Spleen (tissue), 13 donors: ENCODE measurements at regions of chr19 and their contacts with region 1.

Region 1: DNA sequence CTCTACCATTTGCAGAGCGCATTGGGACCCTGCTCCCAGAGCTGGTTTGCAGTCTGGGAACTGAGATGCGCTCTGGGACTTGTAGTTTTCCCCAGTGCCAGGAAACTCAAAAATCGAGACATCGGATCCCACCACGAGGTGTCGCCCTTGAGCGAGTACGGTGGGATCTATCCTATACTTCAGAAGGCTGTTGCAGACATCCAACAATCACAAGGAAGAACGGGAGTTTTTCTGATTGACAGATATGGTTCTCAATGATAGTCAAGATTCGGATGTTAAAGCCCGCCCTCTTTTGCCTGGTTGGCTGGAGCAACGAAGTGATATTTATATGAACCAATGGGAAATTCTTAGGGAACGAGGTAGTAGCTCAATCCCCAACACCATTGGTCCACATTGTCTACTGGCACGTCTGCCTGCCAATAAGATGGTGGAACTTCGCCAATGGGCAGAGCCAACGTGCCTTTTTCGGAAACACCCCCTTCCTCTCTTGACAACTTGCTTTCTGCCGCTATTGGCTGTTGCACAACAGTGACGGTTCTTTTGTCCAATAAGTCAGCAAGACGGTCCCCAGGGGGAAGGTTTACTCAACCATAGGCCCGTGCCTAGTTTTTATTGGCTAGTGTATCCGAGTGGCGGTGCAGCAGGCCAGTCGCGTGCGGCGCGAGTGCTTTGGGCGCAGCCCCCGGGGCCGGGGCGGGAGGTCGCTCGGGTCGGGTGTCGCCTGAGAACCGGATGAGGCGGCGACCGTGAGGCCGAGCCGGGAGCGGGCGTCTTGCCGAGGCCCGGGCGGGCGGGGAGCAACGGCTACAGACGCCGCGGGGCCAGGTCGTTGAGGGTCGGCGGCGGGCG is at the start of gene DNM2:
- DNase-seq: peak; percentile 99
- H3K4me3 ChIP-seq: peak within 1 kb of the TSS; percentile 98 to 100 (median 100)
- H3K27ac ChIP-seq: peak within 1 kb of the TSS; percentile 94 to 99 (median 98)
- H3K4me1 ChIP-seq: peaks cover 28 to 63% (median 48%) of the 10 kb centered on the region in 6 donors
- H3K27me3 ChIP-seq: no peaks in the 10 kb centered on the region
- CTCF ChIP-seq: peak; percentile 68 to 97 (median 88)
- POLR2A ChIP-seq: peak in 1 of 3 donors; percentile 60
- total RNA-seq, gene DNM2: 175 to 298 (median 197) TPM

Region 2: DNA sequence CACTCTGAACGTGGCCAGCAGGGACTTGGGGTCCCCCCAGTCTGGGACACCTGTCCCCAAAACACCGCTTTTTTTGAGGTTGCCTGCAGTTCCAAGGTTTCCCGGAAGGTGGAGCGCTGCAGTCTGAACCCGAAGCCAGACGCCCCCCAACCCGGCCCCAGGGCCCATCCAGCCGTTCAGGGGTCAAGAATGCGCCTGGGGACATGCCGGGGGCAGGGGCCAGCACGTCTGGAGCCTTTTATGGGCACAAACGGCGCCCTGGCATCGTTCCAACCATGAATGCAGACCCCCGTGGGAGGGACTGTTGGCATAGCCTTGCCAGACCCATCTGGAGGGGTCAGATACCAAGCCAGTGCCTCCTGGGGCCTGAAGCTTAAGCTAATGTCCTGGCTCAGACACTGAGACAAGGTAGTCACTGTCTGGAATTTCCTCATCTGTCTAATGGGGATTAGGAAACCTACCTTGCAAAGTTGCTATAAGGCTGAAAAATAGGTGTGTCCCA is 207.2 kb before region 1 on chr19:
- intact Hi-C with region 1: no loop called
- DNase-seq: no peak
- H3K4me3 ChIP-seq: no peak overlapping the region
- H3K27ac ChIP-seq: peak overlapping the region in 2 of 8 donors; percentile 35 to 36
- H3K4me1 ChIP-seq: peaks cover 10 to 56% (median 26%) of the 10 kb centered on the region in 6 donors
- H3K27me3 ChIP-seq: peaks cover 6 to 64% (median 35%) of the 10 kb centered on the region in 7 donors
- CTCF ChIP-seq: peak; percentile 30 to 79 (median 55)
- POLR2A ChIP-seq: no peak

Region 3: GRCh38 chr19:10543420-10544241 is 173.9 kb before region 1 on chr19 and contains the start of gene ATG4D:
- intact Hi-C with region 1: no loop called
- DNase-seq: peak; percentile 94
- H3K4me3 ChIP-seq: peak within 1 kb of the TSS; percentile 73 to 96 (median 88)
- H3K27ac ChIP-seq: peak within 1 kb of the TSS; percentile 85 to 97 (median 94)
- H3K4me1 ChIP-seq: peaks cover 9 to 62% (median 32%) of the 10 kb centered on the region in 6 donors
- H3K27me3 ChIP-seq: peaks cover 0 to 14% (median 0%) of the 10 kb centered on the region in 7 donors
- CTCF ChIP-seq: peak in 4 of 11 experiments; percentile 11 to 27 (median 20)
- POLR2A ChIP-seq: peak in 1 of 3 donors; percentile 41
- total RNA-seq, gene ATG4D: 18.2 to 40.5 (median 31.5) TPM

Region 4: GRCh38 chr19:10769533-10770491 is 52.2 kb after region 1 on chr19:
- intact Hi-C with region 1: loop called (anchors 5 kb)
- DNase-seq: no peak
- H3K4me3 ChIP-seq: peak overlapping the region in 1 of 8 donors; percentile 21
- H3K27ac ChIP-seq: peak overlapping the region; percentile 61 to 92 (median 72)
- H3K4me1 ChIP-seq: peaks cover 34 to 87% (median 58%) of the 10 kb centered on the region in 6 donors
- H3K27me3 ChIP-seq: no peaks in the 10 kb centered on the region
- CTCF ChIP-seq: peak in 10 of 11 experiments; percentile 9 to 56 (median 39)
- POLR2A ChIP-seq: no peak

Region 5: DNA sequence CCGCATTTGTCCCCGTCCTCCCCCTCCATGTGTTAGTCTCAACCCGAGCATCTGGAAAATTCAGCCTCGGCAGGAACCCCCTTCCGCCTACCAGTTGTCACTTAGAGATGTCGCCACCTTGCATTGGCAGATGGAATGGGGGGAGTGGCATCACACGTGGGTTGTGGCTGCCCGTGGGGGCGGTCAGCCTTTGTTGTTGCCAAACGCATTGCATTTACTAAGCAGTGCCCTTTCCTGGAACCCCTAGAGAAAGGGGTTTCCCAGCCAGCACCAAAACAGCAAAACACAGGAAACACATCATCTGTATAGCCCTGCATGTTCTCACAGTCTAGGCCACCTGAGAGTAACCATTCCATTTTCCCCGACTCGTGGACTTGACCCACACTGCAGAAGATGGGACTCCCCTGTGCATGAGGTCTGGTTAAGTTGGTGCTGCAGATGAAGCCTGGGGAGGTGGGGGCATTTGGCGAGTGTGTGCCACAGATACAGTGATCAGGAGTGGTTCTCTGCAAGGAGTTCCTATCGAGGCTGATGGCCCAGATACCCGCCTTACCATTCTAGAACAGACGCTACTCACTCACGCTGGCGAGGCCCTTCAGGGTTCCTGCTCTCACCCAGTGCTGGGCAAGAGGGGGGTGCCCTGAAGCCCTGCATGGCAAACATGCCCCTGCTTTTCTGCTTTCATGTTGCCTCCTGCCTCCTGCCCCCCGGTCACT is 80.1 kb after region 1 on chr19:
- intact Hi-C with region 1: no loop called
- DNase-seq: peak; percentile 88
- H3K4me3 ChIP-seq: peak overlapping the region in 1 of 8 donors; percentile 43
- H3K27ac ChIP-seq: peak overlapping the region in 7 of 8 donors; percentile 23 to 84 (median 61)
- H3K4me1 ChIP-seq: peaks cover 0 to 43% (median 25%) of the 10 kb centered on the region in 6 donors
- H3K27me3 ChIP-seq: no peaks in the 10 kb centered on the region
- CTCF ChIP-seq: no peak
- POLR2A ChIP-seq: no peak

Region 6: DNA sequence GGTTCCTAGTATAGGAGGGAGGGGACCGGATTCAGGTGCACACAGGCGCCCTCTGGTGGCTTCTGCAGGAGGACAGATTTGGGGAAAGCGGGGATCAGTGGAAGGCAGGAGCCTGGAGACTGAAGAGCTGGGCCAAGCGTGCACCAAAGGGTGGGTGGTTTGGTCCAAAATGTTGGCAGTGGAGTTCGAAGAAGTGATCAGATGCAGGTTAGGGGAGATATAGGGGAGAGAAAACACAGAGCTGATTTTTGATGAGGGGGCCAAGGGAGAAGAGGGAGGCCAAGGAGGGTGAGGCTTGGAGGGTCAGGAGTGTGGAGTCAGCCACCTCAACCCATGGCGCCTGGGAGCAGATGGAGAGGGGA is 146.9 kb after region 1 on chr19:
- intact Hi-C with region 1: loop called (anchors 5 kb)
- DNase-seq: peak; percentile 92
- H3K4me3 ChIP-seq: peak overlapping the region in 1 of 8 donors; percentile 34
- H3K27ac ChIP-seq: peak overlapping the region in 3 of 8 donors; percentile 19 to 62 (median 50)
- H3K4me1 ChIP-seq: peaks cover 0 to 46% (median 18%) of the 10 kb centered on the region in 6 donors
- H3K27me3 ChIP-seq: no peaks in the 10 kb centered on the region
- CTCF ChIP-seq: peak; percentile 76 to 91 (median 87)
- POLR2A ChIP-seq: no peak